ENCODE measurements at regions of chr22 and their contacts with region 1.

Region 1: GRCh38 chr22:30423982-30424963 is 1.3 kb upstream of the MTFP1 start:
- DNase-seq: peak; percentile 100
- H3K4me3 Mint-ChIP-seq: peak overlapping the region; percentile 99
- H3K27ac Mint-ChIP-seq: peak overlapping the region; percentile 99
- H3K4me1 Mint-ChIP-seq: peaks cover 63% of the 10 kb centered on the region
- H3K27me3 Mint-ChIP-seq: no peaks in the 10 kb centered on the region

Region 2: DNA sequence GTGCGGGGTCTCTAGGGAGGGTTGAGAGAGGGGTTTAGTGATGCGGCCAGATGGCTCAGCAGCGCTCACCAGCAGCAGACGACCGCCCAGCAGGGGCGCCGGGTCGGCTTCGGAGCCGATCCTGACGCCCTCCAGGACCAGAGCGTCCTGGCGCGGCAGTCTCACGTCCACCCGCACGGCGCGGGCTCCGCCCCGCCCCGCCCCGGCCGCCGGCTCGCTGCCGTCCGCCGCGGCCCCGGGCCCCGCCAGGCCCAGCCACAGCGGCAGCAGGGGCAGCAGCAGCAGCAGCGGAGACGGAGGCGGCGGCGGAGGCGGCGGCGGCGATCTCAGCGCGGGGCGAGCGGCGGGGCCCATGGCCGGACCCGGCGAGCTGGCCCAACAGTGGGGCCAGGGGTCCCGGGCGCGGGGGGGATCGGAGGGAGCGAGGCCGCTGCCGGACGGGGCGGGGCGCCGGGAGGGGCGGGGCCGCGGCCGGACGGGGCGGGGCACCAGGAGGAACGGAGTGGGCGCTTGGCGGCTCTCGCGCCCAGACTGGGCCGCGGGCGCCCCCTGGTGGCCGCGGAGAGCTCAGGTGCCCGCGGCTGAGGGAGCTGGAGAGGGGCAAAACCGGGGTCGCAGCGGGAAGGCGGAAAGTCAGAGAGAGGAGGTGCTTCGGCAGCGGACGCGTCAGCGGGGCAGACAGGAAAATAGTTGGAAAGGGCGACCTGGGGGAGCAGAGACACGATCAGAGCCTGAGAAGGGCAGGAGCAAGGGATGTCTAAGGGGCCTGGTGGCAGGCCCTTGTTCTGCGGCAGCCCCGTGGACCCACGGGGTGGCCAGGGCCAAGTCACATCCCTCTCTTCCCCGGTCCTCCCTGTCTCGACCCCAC is 37.1 kb before region 1 on chr22 and contains the start of gene RNF215:
- CTCF ChIA-PET with region 1: interaction called, 28 read pairs
- POLR2A ChIA-PET with region 1: no interaction called
- DNase-seq: peak; percentile 75
- H3K4me3 Mint-ChIP-seq: peak within 1 kb of the TSS; percentile 77
- H3K27ac Mint-ChIP-seq: peak within 1 kb of the TSS; percentile 88
- H3K4me1 Mint-ChIP-seq: peaks cover 29% of the 10 kb centered on the region
- H3K27me3 Mint-ChIP-seq: no peaks in the 10 kb centered on the region
- total RNA-seq, gene RNF215: 9.8 to 9.9 TPM

Region 3: GRCh38 chr22:30396871-30397655 is 27.2 kb before region 1 on chr22 and contains the start of gene SEC14L2:
- CTCF ChIA-PET with region 1: interaction called, 36 read pairs
- POLR2A ChIA-PET with region 1: interaction called, 3 read pairs
- DNase-seq: peak; percentile 65
- H3K4me3 Mint-ChIP-seq: peak within 1 kb of the TSS; percentile 82
- H3K27ac Mint-ChIP-seq: peak within 1 kb of the TSS; percentile 74
- H3K4me1 Mint-ChIP-seq: peaks cover 49% of the 10 kb centered on the region
- H3K27me3 Mint-ChIP-seq: no peaks in the 10 kb centered on the region
- total RNA-seq, gene SEC14L2: 7.6 to 10.5 TPM

Region 4: GRCh38 chr22:30408414-30409104 is 15.7 kb before region 1 on chr22:
- CTCF ChIA-PET with region 1: interaction called, 18 read pairs
- POLR2A ChIA-PET with region 1: interaction called, 5 read pairs
- DNase-seq: no peak
- H3K4me3 Mint-ChIP-seq: no peak overlapping the region
- H3K27ac Mint-ChIP-seq: no peak overlapping the region
- H3K4me1 Mint-ChIP-seq: peaks cover 25% of the 10 kb centered on the region
- H3K27me3 Mint-ChIP-seq: no peaks in the 10 kb centered on the region

Region 5: DNA sequence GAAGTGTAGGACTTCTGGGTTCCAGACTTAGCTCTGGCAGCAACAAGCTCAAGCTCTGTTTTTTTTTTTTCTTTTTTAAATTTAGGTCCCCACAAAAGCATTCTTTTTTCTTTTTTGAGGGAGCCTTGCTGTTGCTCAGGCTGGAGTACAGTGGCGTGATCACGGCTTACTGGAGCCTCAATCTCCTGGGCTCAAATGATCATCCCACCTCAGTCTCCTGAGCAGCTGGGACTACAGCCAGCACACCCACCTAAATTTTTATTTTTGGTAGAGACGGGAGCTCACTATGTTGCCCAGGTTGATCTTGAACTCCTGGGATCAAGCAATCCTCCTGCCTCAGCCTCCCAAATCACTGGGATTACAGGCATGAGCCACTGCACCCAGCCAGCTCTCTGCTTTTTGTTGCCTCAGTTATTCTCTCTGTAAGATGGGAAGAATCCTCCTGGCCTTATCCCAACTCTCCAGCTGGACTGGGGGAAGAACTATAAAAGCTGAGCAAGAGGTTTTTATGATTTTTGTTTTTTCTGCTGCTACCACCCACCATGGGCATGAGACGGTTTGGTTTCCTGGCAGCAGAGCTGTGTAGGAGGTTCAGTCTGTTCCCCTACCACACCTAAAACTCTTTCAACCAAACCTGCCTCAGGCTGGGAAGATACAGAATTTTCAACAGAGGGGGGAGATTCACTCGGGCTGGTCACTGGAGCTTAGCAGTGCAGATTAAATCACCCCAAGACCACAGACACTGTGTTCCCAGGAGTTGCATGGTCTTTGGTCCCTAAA is 10.3 kb before region 1 on chr22:
- CTCF ChIA-PET with region 1: interaction called, 18 read pairs
- POLR2A ChIA-PET with region 1: interaction called, 5 read pairs
- DNase-seq: no peak
- H3K4me3 Mint-ChIP-seq: no peak overlapping the region
- H3K27ac Mint-ChIP-seq: no peak overlapping the region
- H3K4me1 Mint-ChIP-seq: peaks cover 33% of the 10 kb centered on the region
- H3K27me3 Mint-ChIP-seq: no peaks in the 10 kb centered on the region

Region 6: DNA sequence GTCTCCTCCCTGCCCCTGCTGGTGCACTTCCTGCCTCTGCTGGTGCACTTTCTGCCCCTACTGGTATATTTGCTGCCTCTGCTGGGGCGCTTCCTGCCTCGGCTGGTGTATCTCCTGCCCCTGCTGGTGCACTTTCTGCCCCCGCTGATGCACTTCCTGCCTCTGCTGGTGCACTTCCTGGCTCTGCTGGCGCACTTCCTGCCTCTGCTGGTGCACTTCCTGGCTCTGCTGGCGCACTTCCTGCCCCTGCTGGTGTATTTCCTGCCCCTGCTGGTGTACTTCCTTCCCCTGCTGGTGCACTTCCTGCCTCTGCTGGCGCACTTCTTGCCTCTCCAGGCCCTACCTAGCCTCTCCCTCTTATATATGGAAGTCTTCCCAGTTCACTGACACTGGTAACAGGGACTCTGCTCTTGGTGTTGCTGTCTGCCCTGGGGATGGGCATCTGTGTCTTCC is 11.4 kb after region 1 on chr22:
- CTCF ChIA-PET with region 1: interaction called, 91 read pairs
- POLR2A ChIA-PET with region 1: interaction called, 4 read pairs
- DNase-seq: peak; percentile 82
- H3K4me3 Mint-ChIP-seq: peak overlapping the region; percentile 69
- H3K27ac Mint-ChIP-seq: peak overlapping the region; percentile 96
- H3K4me1 Mint-ChIP-seq: peaks cover 23% of the 10 kb centered on the region
- H3K27me3 Mint-ChIP-seq: peaks cover 10% of the 10 kb centered on the region

Region 7: DNA sequence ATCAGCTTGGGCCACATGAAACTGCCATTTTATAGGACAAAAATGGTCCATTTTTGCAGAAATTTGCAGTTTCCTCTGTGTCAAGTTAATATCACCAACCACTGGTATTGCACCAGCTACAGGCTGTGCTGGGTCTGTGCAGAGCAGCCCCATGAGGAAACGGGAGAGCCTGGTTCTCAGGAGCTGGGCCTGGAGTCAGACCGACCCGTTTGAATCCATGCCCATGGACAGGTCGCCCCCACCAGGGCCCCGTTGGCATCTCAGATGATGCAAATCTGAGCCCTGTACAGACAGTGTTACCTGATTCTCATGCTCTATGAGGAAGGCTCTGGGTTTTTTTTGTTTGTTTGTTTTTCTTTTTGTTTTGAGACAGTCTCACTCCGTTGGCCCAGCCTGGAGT is 132.1 kb after region 1 on chr22:
- CTCF ChIA-PET with region 1: no interaction called
- POLR2A ChIA-PET with region 1: no interaction called
- DNase-seq: no peak
- H3K4me3 Mint-ChIP-seq: no peak overlapping the region
- H3K27ac Mint-ChIP-seq: no peak overlapping the region
- H3K4me1 Mint-ChIP-seq: peaks cover 2% of the 10 kb centered on the region
- H3K27me3 Mint-ChIP-seq: no peaks in the 10 kb centered on the region